ENCODE measurements at regions of chr16 and their contacts with region 1.

Region 1: DNA sequence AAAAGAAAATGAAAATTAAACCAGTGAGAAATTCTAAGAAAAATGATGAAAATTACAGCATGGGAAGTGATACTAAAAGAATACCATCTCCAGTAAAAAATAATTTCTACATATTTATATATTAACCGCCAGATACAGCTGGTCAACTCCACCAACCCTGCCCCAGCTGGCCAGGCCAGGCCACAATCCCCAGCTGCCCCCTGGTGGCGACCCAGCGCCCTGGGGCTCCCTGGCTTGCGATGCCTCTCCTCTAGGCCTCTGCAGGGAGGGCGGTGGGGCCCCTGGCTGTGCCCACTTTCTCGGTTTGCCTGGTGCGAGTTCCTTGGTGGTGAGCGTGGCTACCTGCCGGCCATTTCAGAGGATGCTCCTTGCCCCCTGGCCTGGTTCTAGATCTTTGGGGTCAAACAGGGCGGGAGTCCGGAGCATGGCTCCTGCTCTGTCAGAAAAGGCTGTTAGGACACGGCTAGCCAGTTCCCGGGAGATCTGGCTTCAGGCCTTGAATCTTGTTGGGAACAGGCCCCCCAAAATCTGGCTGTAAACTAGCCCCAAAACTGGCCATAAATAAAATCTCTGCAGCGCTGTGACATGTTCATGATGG is 14.5 kb downstream of the GLIS2 start:
- DNase-seq: no peak
- ATAC-seq: peak; percentile 85
- H3K4me3 ChIP-seq: no peak overlapping the region
- H3K27ac ChIP-seq: no peak overlapping the region
- H3K4me1 ChIP-seq: peaks cover 2% of the 10 kb centered on the region
- H3K27me3 ChIP-seq: no peaks in the 10 kb centered on the region
- CTCF ChIP-seq: peak; percentile 94 to 97 (median 95)
- EP300 ChIP-seq: no peak
- POLR2A ChIP-seq: no peak
- RAD21 ChIP-seq: peak; percentile 96

Region 2: GRCh38 chr16:4200000-4200780 is 130.2 kb before region 1 on chr16:
- CTCF ChIA-PET with region 1: interaction called, 6 read pairs
- POLR2A ChIA-PET with region 1: no interaction called
- RAD21 ChIA-PET with region 1: interaction called, 3 read pairs
- SMC1A ChIA-PET with region 1: no interaction called
- in situ Hi-C with region 1: no loop called
- intact Hi-C with region 1: loop called (anchors 10 kb)
- DNase-seq: no peak
- ATAC-seq: peak; percentile 61; the same call in 2 of the 3 replicates
- H3K4me3 ChIP-seq: no peak overlapping the region
- H3K27ac ChIP-seq: no peak overlapping the region
- H3K4me1 ChIP-seq: no peaks in the 10 kb centered on the region
- H3K27me3 ChIP-seq: no peaks in the 10 kb centered on the region
- CTCF ChIP-seq: peak; percentile 21 to 50 (median 43); a peak in 3 of 6 replicates
- EP300 ChIP-seq: no peak
- POLR2A ChIP-seq: no peak
- RAD21 ChIP-seq: peak; percentile 61

Region 3: DNA sequence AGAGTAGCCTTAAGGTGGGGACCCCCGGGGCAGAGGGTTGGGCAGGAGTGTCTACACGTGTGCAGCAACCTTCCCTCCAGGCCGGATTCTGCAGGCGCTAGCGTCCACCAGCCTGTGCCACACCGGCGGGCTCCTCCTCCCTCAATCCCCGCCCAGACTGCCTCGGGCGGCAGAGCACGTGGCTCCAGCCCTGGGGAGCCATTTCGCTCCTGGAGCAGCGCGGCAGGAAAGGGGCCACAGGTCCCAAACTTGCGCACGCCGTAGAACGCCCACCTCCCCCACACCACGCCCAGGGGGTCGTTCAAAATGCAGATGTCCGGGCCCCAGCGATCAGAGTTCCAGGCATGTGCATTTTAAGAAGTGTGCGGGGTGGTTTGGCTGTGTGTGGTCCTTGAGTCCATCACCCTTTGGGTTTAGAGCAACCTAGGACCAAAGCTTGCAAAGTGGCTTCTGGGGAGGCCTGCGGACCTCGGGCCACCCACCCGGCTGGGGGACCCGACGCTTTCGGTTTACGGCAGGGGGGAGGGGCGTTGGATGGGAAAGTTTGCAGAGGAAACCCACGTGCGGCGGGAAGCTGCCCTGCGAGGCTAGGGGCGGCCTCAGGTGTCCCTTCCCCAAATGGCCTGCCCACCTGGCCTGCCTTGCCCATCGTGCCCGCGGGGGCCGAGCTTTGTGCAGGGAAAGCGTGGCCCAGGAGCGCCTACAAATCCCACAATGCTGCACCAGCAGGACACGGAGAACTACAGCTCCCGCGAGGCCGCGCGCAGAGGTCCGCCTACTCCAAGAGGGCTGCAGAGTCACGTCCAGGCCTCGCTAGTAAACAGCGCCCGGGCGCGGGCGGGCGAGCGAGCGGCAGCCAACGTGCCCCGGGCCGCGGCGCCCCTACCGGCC is 59.0 kb before region 1 on chr16:
- CTCF ChIA-PET with region 1: interaction called, 5 read pairs
- POLR2A ChIA-PET with region 1: no interaction called
- RAD21 ChIA-PET with region 1: interaction called, 4 read pairs
- SMC1A ChIA-PET with region 1: interaction called, 3 read pairs
- in situ Hi-C with region 1: no loop called
- intact Hi-C with region 1: loop called (anchors 5 kb)
- DNase-seq: peak; percentile 52
- ATAC-seq: peak; percentile 92
- H3K4me3 ChIP-seq: peak overlapping the region; percentile 91
- H3K27ac ChIP-seq: peak overlapping the region; percentile 84
- H3K4me1 ChIP-seq: no peaks in the 10 kb centered on the region; the same call in 1 of the 2 replicates
- H3K27me3 ChIP-seq: no peaks in the 10 kb centered on the region
- CTCF ChIP-seq: peak; percentile 4 to 23 (median 13); a peak in 1 of 6 replicates
- EP300 ChIP-seq: no peak
- POLR2A ChIP-seq: peak; percentile 76; the same call in 1 of the 2 replicates
- RAD21 ChIP-seq: no peak

Region 4: GRCh38 chr16:4288148-4288921 is 42.0 kb before region 1 on chr16:
- CTCF ChIA-PET with region 1: interaction called, 145 read pairs
- POLR2A ChIA-PET with region 1: interaction called, 10 read pairs
- RAD21 ChIA-PET with region 1: interaction called, 18 read pairs
- SMC1A ChIA-PET with region 1: interaction called, 10 read pairs
- in situ Hi-C with region 1: loop called (anchors 5 kb)
- intact Hi-C with region 1: loop called (anchors 1 kb)
- DNase-seq: no peak
- ATAC-seq: peak; percentile 100
- H3K4me3 ChIP-seq: no peak overlapping the region
- H3K27ac ChIP-seq: no peak overlapping the region
- H3K4me1 ChIP-seq: peaks cover 3% of the 10 kb centered on the region; the same call in 1 of the 2 replicates
- H3K27me3 ChIP-seq: no peaks in the 10 kb centered on the region; a peak in 1 of 4 replicates
- CTCF ChIP-seq: peak; percentile 97 to 100 (median 99); a peak in 5 of 6 replicates
- EP300 ChIP-seq: no peak
- POLR2A ChIP-seq: no peak
- RAD21 ChIP-seq: peak; percentile 92

Region 5: GRCh38 chr16:4307215-4308037 is 22.9 kb before region 1 on chr16:
- CTCF ChIA-PET with region 1: interaction called, 140 read pairs
- POLR2A ChIA-PET with region 1: interaction called, 6 read pairs
- RAD21 ChIA-PET with region 1: interaction called, 68 read pairs
- SMC1A ChIA-PET with region 1: interaction called, 62 read pairs
- in situ Hi-C with region 1: no loop called
- intact Hi-C with region 1: loop called (anchors 2 kb)
- DNase-seq: peak; percentile 72
- ATAC-seq: peak; percentile 92
- H3K4me3 ChIP-seq: peak overlapping the region; percentile 94
- H3K27ac ChIP-seq: peak overlapping the region; percentile 87
- H3K4me1 ChIP-seq: peaks cover 13% of the 10 kb centered on the region
- H3K27me3 ChIP-seq: no peaks in the 10 kb centered on the region
- CTCF ChIP-seq: no peak
- EP300 ChIP-seq: no peak
- POLR2A ChIP-seq: peak; percentile 84
- RAD21 ChIP-seq: no peak

Region 6: GRCh38 chr16:4378161-4378666 is 47.8 kb after region 1 on chr16:
- CTCF ChIA-PET with region 1: no interaction called
- POLR2A ChIA-PET with region 1: no interaction called
- RAD21 ChIA-PET with region 1: no interaction called
- SMC1A ChIA-PET with region 1: no interaction called
- in situ Hi-C with region 1: no loop called
- intact Hi-C with region 1: no loop called
- DNase-seq: no peak
- ATAC-seq: no peak
- H3K4me3 ChIP-seq: no peak overlapping the region
- H3K27ac ChIP-seq: no peak overlapping the region
- H3K4me1 ChIP-seq: no peaks in the 10 kb centered on the region
- H3K27me3 ChIP-seq: no peaks in the 10 kb centered on the region
- CTCF ChIP-seq: no peak
- EP300 ChIP-seq: no peak
- POLR2A ChIP-seq: no peak
- RAD21 ChIP-seq: no peak